H1 (cell line): ENCODE measurements at regions of chr2 and their contacts with region 1.

Region 1: DNA sequence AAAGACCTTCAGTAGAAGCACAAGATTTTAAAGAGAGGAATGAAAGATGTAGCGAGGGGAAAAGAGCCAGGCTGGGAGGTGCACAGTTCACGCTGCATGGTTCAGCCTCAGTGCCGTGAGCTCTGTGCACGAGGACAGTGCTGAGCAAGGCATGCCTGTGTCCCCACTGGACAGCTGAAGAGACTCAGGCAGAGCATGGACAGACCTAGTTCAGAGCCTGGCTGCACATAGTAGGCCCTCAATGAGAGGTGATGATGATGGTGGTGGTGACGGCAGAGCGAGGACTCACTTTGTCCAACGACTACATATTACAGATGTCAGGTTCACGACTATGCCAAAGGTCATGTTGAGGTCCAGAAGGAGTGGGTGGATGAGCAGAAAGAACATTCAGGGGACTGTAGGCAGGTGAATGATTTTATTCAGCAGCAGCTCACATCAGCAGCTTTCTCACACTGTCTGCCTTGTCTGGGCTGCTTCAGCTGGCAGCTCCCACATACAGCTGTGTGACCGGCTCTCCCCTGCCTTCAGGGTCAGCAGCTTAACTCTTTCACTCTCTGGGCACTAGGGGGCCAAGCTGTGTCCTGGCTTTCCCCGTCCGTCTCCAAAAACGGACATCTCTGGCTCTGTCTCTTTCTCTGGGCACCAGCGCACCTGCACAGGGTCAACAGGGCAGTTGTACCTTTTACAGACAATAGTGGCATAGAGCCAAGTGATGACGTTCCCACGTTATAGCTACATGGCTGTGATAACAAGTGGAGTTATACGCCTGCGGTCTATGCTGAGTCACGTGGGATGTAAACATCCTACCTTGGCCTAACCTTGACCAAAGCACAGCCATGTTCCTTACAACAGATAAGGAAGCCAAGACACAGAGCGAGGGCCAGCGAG is 128.8 kb upstream of the MSH6 start:
- DNase-seq: peak in 1 of 2 experiments; percentile 68
- H3K4me3 ChIP-seq: no peak overlapping the region
- H3K27ac ChIP-seq: no peak overlapping the region
- H3K4me1 ChIP-seq: peaks cover 9 to 19% (median 17%) of the 10 kb centered on the region in 4 experiments
- H3K27me3 ChIP-seq: no peaks in the 10 kb centered on the region; a peak in 2 of 7 replicates
- CTCF ChIP-seq: peak; percentile 61 to 83 (median 73)
- EP300 ChIP-seq: no peak
- POLR2A ChIP-seq: no peak
- RAD21 ChIP-seq: peak; percentile 58 to 70

Region 2: DNA sequence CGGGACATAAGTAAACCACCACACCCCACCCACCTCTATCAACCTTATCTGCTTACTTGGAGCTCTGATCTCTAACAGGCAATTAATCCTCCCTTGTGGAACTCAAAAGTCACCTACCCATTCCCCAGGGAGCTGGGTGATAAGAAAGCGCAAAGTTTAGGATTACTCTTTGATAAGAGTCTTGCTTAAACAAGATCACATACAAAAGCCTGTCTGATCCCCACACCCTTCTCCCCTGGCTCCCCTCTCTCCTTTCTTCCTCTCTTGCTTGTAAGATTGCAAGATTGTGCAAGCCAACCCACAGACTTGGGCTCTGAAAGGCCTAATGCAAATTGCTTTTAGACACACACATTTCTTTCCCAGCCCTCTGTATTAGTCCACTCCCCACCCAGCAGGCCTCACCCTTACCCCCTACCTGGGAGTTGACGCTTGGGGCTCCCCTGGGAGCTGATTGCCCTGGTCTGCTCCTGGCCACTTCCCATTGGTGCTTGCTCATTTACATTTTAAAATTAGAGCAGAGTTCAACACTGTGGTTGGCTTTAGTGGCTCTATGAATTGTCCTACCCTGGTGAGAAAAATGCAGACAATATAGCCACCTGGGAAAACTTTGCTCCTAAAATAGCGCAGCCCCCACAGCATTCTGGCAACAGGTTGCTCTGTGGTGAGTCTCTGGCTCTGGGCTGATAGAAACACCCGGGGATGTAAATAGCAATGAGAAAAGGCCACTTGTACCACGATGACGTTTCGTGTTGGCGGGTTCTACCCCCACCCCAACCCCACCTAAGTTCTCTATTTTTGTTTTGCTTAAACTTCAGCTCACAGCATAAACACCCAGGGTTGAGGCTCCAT is 344.0 kb before region 1 on chr2:
- CTCF ChIA-PET with region 1: no interaction called
- POLR2A ChIA-PET with region 1: no interaction called
- DNase-seq: no peak
- H3K4me3 ChIP-seq: no peak overlapping the region
- H3K27ac ChIP-seq: no peak overlapping the region
- H3K4me1 ChIP-seq: peaks cover 0 to 13% (median 10%) of the 10 kb centered on the region in 4 experiments; a peak in 6 of 7 replicates
- H3K27me3 ChIP-seq: no peaks in the 10 kb centered on the region
- CTCF ChIP-seq: no peak
- EP300 ChIP-seq: no peak
- POLR2A ChIP-seq: no peak
- RAD21 ChIP-seq: no peak

Region 3: DNA sequence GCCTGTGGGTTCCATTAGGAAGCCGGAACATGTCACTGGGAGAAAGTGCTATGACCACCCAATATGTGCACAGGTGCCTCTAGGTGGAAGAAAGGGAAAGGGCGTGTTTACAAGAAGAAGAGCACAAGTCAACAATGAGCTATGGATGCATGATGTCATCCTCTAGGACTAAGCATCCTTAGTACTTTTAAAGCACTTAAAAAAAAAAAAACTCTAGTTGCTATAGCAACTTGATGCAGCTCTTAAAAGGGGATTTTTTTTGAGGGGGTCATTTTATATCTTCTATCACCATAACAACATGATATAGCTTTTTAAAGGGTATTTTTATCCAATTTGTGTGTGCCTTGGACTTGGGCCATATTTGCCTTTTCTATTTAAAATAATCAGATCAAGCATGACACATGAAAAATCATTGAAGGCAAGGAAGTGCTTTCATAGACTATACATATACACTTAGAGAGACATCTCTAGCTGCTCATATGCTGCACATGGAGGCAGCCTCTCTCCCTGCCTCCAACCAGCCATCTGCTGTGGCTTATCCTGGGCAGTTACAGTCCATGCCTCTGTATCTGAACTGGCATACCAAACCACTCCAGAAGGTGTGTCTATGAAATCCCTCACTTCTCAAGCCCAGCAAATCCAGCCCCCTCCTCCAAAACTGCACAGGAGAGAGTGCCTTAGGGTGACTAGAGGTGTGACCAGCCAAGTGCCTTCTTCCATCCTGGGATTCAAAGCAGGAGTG is 85.9 kb before region 1 on chr2:
- CTCF ChIA-PET with region 1: interaction called, 12 read pairs
- POLR2A ChIA-PET with region 1: no interaction called
- DNase-seq: no peak
- H3K4me3 ChIP-seq: peak overlapping the region; percentile 57 to 64 (median 61); a peak in 4 of 8 replicates
- H3K27ac ChIP-seq: no peak overlapping the region
- H3K4me1 ChIP-seq: peaks cover 2 to 18% (median 7%) of the 10 kb centered on the region in 4 experiments; a peak in 5 of 7 replicates
- H3K27me3 ChIP-seq: peaks cover 8 to 36% (median 29%) of the 10 kb centered on the region in 4 experiments
- CTCF ChIP-seq: no peak
- EP300 ChIP-seq: no peak
- POLR2A ChIP-seq: no peak
- RAD21 ChIP-seq: no peak

Region 4: GRCh38 chr2:47631792-47632398 is 22.3 kb before region 1 on chr2:
- CTCF ChIA-PET with region 1: interaction called, 19 read pairs
- POLR2A ChIA-PET with region 1: interaction called, 3 read pairs
- DNase-seq: no peak
- H3K4me3 ChIP-seq: no peak overlapping the region
- H3K27ac ChIP-seq: no peak overlapping the region
- H3K4me1 ChIP-seq: peaks cover 0 to 8% (median 5%) of the 10 kb centered on the region in 4 experiments; a peak in 5 of 7 replicates
- H3K27me3 ChIP-seq: no peaks in the 10 kb centered on the region; a peak in 1 of 7 replicates
- CTCF ChIP-seq: no peak
- EP300 ChIP-seq: no peak
- POLR2A ChIP-seq: no peak
- RAD21 ChIP-seq: no peak

Region 5: GRCh38 chr2:47664817-47665216 is 10.7 kb after region 1 on chr2:
- CTCF ChIA-PET with region 1: interaction called, 64 read pairs
- POLR2A ChIA-PET with region 1: interaction called, 5 read pairs
- DNase-seq: peak in 1 of 2 experiments; percentile 58
- H3K4me3 ChIP-seq: no peak overlapping the region
- H3K27ac ChIP-seq: no peak overlapping the region
- H3K4me1 ChIP-seq: peaks cover 2 to 15% (median 10%) of the 10 kb centered on the region in 4 experiments; a peak in 5 of 7 replicates
- H3K27me3 ChIP-seq: no peaks in the 10 kb centered on the region
- CTCF ChIP-seq: peak; percentile 56 to 70 (median 61)
- EP300 ChIP-seq: no peak
- POLR2A ChIP-seq: no peak
- RAD21 ChIP-seq: peak; percentile 63 to 76

Region 6: DNA sequence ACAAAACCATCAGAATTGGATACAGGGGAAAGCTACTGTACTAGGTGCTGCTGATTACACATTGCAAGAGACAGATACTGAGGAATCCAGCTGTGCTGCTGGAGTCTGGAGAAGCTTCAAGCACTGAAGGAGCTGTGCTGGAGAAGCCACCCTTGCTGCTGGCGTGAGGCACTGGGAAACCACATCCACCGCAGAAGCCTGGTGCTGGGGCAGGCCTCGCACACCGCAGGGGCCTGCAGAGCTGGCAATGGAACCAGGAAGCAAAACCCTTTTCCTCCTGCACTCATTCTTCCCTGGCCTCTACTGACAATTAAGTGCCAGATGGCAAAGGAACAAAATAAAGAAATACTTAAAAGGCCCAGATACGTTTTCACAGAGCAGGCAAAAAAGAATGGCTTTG is 34.4 kb after region 1 on chr2:
- CTCF ChIA-PET with region 1: interaction called, 10 read pairs
- POLR2A ChIA-PET with region 1: interaction called, 3 read pairs
- DNase-seq: no peak
- H3K4me3 ChIP-seq: no peak overlapping the region
- H3K27ac ChIP-seq: no peak overlapping the region
- H3K4me1 ChIP-seq: peaks cover 0 to 3% (median 0%) of the 10 kb centered on the region in 4 experiments; a peak in 3 of 7 replicates
- H3K27me3 ChIP-seq: no peaks in the 10 kb centered on the region
- CTCF ChIP-seq: no peak
- EP300 ChIP-seq: no peak
- POLR2A ChIP-seq: no peak
- RAD21 ChIP-seq: no peak

Region 7: GRCh38 chr2:47719099-47719498 is 65.0 kb after region 1 on chr2:
- CTCF ChIA-PET with region 1: interaction called, 17 read pairs
- POLR2A ChIA-PET with region 1: no interaction called
- DNase-seq: no peak
- H3K4me3 ChIP-seq: no peak overlapping the region
- H3K27ac ChIP-seq: no peak overlapping the region
- H3K4me1 ChIP-seq: no peaks in the 10 kb centered on the region; a peak in 1 of 7 replicates
- H3K27me3 ChIP-seq: no peaks in the 10 kb centered on the region
- CTCF ChIP-seq: no peak
- EP300 ChIP-seq: no peak
- POLR2A ChIP-seq: no peak
- RAD21 ChIP-seq: no peak